ENCODE measurements at regions of chr10 and their contacts with region 1.

Region 1: GRCh38 chr10:11260170-11260569 is 242.5 kb downstream of the CELF2 start:
- DNase-seq: no peak
- ATAC-seq: peak in 2 of 4 donors; percentile 13 to 25
- H3K4me3 ChIP-seq: no peak overlapping the region
- H3K27ac ChIP-seq: peak overlapping the region in 3 of 12 donors; percentile 12 to 42 (median 34)
- H3K4me1 ChIP-seq: peaks cover 0 to 85% (median 41%) of the 10 kb centered on the region in 12 donors
- H3K27me3 ChIP-seq: no peaks in the 10 kb centered on the region
- CTCF ChIP-seq: peak in 3 of 12 donors; percentile 14 to 20 (median 19)
- POLR2A ChIP-seq: no peak

Region 2: DNA sequence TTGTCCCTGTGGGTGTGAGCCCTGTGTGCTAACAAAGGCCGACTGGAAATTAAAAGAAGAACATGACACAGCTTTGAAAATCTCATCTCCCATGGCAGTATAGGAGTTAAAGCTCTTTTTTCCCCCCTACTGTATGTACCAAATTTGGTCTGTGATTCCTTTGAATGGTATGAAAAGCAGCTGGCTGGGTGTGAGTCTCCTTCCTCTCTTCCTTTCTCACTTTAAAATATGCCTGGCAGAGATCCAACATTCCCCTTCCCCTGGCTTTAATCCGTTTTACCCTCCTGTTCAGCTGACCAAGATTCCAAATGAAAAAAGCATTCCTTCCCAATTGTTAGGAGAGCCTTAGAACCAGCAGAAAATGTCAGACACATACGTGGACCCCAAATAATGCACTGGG is 467.5 kb before region 1 on chr10:
- intact Hi-C with region 1: loop called in 1 of 10 experiments (anchors 10 kb)
- DNase-seq: no peak
- ATAC-seq: peak; percentile 27 to 78 (median 42)
- H3K4me3 ChIP-seq: peak overlapping the region in 1 of 12 donors; percentile 25
- H3K27ac ChIP-seq: peak overlapping the region in 7 of 12 donors; percentile 4 to 73 (median 27)
- H3K4me1 ChIP-seq: peaks cover 0 to 46% (median 34%) of the 10 kb centered on the region in 12 donors
- H3K27me3 ChIP-seq: no peaks in the 10 kb centered on the region
- CTCF ChIP-seq: no peak
- POLR2A ChIP-seq: no peak

Region 3: DNA sequence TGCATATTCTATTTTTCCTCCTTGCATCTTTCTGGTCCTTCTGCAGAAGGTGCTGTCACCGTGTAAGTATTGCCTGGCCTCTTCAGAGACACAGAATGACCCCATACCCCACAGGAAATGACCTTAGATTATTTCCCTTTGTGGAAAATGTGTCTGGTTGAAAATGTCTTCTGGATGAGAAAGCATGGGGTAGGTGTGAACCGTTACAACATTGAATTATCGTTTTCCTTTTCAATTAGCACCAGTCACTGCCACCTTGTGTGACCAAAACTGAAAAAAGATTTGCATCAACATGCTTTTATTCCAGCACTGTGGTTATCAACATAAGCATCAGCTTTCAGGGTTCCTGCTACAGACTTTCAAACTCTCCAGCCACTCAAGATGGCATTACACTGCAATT is 300.5 kb before region 1 on chr10:
- intact Hi-C with region 1: loop called in 1 of 10 experiments (anchors 10 kb)
- DNase-seq: no peak
- ATAC-seq: no peak
- H3K4me3 ChIP-seq: no peak overlapping the region
- H3K27ac ChIP-seq: no peak overlapping the region
- H3K4me1 ChIP-seq: peaks cover 0 to 13% (median 6%) of the 10 kb centered on the region in 12 donors
- H3K27me3 ChIP-seq: no peaks in the 10 kb centered on the region
- CTCF ChIP-seq: no peak
- POLR2A ChIP-seq: no peak

Region 4: GRCh38 chr10:11024596-11024995 is 235.6 kb before region 1 on chr10:
- intact Hi-C with region 1: loop called in 3 of 10 experiments (anchors 5 to 10 kb)
- DNase-seq: no peak
- ATAC-seq: peak in 3 of 4 donors; percentile 57 to 86 (median 83)
- H3K4me3 ChIP-seq: no peak overlapping the region
- H3K27ac ChIP-seq: peak overlapping the region in 5 of 12 donors; percentile 4 to 61 (median 13)
- H3K4me1 ChIP-seq: peaks cover 0 to 77% (median 26%) of the 10 kb centered on the region in 12 donors
- H3K27me3 ChIP-seq: peaks cover 0 to 11% (median 0%) of the 10 kb centered on the region in 9 donors
- CTCF ChIP-seq: no peak
- POLR2A ChIP-seq: no peak

Region 5: DNA sequence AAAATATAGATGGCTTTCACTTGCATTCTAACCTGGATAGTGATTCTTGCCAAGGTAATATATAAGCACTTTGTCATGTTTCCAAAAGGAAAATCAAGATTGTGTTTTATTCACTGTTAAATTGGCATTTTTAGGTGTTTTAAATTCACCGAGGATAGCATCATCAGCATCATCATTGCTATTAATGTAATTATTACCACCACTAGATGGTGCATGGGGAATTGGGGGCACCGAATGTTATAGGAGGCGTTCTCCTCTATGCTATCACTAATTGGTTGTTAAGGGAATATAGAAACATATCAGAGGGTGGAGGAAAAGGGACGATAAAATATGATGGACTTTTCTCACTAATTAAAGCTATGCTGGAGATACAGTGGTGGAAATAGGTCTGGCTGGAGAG is 147.0 kb before region 1 on chr10:
- intact Hi-C with region 1: loop called in 2 of 10 experiments (anchors 5 to 10 kb)
- DNase-seq: no peak
- ATAC-seq: no peak
- H3K4me3 ChIP-seq: no peak overlapping the region
- H3K27ac ChIP-seq: peak overlapping the region in 3 of 12 donors; percentile 35 to 81 (median 80)
- H3K4me1 ChIP-seq: peaks cover 6 to 75% (median 31%) of the 10 kb centered on the region in 12 donors
- H3K27me3 ChIP-seq: no peaks in the 10 kb centered on the region
- CTCF ChIP-seq: peak in 8 of 12 donors; percentile 20 to 48 (median 33)
- POLR2A ChIP-seq: no peak

Region 6: DNA sequence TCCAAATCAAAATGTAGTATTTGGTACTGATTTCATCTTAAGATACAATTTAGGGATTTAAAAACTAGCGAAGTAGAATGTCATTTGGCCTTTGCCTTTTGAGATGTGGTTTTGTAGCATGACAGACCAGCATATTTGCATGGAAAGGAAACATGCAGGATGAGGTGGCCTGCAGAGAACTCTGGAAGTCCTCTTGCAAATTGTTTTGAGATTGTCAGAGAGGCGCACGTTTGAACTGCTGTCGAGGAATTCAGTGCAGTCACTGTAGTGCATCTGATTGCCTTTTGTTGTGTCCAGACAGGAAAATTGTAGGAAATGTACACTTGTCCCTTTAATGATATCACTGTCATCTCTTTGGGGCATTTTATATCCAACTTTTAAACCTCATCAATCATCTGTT is 105.8 kb before region 1 on chr10:
- intact Hi-C with region 1: no loop called
- DNase-seq: no peak
- ATAC-seq: no peak
- H3K4me3 ChIP-seq: no peak overlapping the region
- H3K27ac ChIP-seq: no peak overlapping the region
- H3K4me1 ChIP-seq: peaks cover under 1 to 81% (median 43%) of the 10 kb centered on the region in 12 donors
- H3K27me3 ChIP-seq: no peaks in the 10 kb centered on the region
- CTCF ChIP-seq: no peak
- POLR2A ChIP-seq: no peak

Region 7: DNA sequence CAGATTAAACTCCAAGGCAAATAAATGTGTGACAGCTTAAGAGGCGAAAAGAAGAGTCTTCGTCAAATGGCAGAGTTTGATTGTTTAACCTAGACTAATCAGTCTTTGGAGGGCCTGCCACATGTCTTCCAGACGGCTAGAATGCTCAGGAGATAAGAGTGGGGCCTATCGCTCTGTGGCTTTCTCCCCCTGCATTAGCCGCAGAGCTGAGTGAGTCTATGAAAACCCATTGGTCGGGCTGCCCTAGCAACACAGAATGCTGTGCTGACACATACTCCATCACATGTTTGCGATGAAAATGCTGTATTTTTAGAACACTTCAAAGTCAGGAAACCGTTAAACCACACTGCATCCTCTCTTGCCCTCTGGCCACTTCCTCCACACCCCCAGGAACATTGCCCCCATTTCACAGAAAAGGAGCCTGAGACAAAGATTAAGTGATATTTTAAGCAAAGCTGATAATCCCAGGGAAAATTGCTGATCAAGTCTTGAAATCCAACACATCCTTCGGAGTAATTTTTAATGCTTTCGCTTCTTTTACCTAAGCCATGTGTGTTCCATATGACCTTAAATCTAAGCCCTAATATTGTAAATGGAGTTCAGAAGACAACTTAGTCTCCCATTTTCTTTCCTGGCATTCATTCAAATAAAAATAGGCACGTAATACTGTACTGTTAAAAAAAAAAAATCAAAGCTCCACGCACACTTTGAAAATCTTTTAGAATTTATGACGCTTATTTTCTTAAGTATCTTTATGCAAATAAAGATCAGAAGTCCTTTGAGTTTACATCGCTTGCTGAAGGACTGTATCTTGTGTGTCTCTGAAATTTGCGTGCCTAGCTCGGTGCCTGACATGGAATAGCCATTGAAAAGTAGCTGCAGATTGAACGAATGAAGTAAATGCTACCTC is 81.3 kb before region 1 on chr10:
- intact Hi-C with region 1: loop called in 8 of 10 experiments (anchors 5 to 10 kb)
- DNase-seq: peak; percentile 58 to 70 (median 62)
- ATAC-seq: peak; percentile 20 to 81 (median 78)
- H3K4me3 ChIP-seq: peak overlapping the region in 1 of 12 donors; percentile 45
- H3K27ac ChIP-seq: peak overlapping the region in 11 of 12 donors; percentile 26 to 98 (median 62)
- H3K4me1 ChIP-seq: peaks cover 0 to 99% (median 56%) of the 10 kb centered on the region in 12 donors
- H3K27me3 ChIP-seq: no peaks in the 10 kb centered on the region
- CTCF ChIP-seq: no peak
- POLR2A ChIP-seq: no peak

Region 8: DNA sequence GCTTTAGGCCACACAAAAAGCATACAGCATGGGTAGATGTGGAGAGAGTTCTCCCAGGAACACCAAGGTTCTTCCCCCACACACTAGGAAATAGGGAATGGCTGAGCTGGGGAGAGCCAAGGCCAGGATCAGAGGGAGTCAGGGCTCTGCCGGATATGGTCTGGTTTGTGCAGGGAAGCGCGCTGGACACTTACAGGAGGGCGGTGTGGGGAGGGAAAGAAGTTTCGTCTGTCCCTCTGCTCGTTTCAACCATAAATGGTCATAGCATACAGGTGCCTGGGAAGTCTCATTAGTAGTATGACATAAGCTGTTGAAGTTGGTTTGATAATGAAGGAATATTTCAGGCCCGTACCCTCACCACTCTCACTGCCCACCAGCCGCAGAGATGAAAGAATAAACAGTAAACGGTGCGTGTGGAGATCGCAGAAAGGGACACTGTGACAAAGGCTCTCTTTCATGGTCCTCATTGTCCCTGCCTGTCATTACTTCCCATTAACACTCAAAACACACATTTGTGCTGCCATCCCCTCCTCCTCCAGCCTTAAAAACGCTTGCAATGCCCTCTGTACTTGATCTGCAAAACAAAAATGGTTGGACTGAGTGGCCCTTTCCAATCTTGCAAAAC is 35.3 kb before region 1 on chr10:
- intact Hi-C with region 1: loop called in 1 of 10 experiments (anchors 5 kb)
- DNase-seq: peak in 2 of 5 donors; percentile 37 to 50
- ATAC-seq: peak; percentile 67 to 84 (median 72)
- H3K4me3 ChIP-seq: no peak overlapping the region
- H3K27ac ChIP-seq: peak overlapping the region in 9 of 12 donors; percentile 21 to 81 (median 53)
- H3K4me1 ChIP-seq: peaks cover 0 to 68% (median 26%) of the 10 kb centered on the region in 12 donors
- H3K27me3 ChIP-seq: no peaks in the 10 kb centered on the region
- CTCF ChIP-seq: no peak
- POLR2A ChIP-seq: no peak

Measured in heart left ventricle (tissue), 16 donors.